Activated CD8-positive, alpha-beta T cell treated with anti-CD3 and anti-CD28 coated beads for 36 hours (primary cell): ENCODE measurements at regions of chr5 and their contacts with region 1.

Region 1: GRCh38 chr5:154520861-154521453 is 42.9 kb upstream of the HAND1 start:
- DNase-seq: peak; percentile 20
- ATAC-seq: no peak
- H3K4me3 Mint-ChIP-seq: no peak overlapping the region
- H3K27ac Mint-ChIP-seq: no peak overlapping the region
- H3K4me1 Mint-ChIP-seq: no peaks in the 10 kb centered on the region
- H3K27me3 Mint-ChIP-seq: peaks cover 48% of the 10 kb centered on the region
- CTCF ChIP-seq: peak; percentile 75

Region 2: DNA sequence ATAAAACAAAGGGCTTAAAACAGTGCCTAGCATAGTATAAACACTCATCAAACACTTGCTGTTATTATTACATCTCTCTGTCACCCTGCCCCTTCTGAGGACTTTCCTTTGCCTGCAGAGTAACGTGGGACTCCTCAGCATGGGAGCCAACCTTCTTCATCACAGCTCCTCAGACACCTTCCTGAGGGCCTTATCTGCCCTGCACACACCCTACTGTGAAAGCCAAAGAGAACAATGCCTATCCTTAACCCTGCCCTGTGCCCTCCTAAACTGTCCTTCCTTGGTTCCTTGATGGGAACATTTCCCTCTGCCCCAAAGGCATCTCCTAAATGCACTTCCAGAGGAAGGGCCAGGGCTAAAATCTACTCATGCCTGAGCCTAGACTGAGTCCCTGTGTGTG is 22.4 kb before region 1 on chr5:
- CTCF ChIA-PET with region 1: interaction called, 20 read pairs
- POLR2A ChIA-PET with region 1: no interaction called
- intact Hi-C with region 1: no loop called
- DNase-seq: no peak
- ATAC-seq: no peak
- H3K4me3 Mint-ChIP-seq: no peak overlapping the region
- H3K27ac Mint-ChIP-seq: no peak overlapping the region
- H3K4me1 Mint-ChIP-seq: peaks cover 2% of the 10 kb centered on the region
- H3K27me3 Mint-ChIP-seq: peaks cover 32% of the 10 kb centered on the region
- CTCF ChIP-seq: no peak

Region 3: DNA sequence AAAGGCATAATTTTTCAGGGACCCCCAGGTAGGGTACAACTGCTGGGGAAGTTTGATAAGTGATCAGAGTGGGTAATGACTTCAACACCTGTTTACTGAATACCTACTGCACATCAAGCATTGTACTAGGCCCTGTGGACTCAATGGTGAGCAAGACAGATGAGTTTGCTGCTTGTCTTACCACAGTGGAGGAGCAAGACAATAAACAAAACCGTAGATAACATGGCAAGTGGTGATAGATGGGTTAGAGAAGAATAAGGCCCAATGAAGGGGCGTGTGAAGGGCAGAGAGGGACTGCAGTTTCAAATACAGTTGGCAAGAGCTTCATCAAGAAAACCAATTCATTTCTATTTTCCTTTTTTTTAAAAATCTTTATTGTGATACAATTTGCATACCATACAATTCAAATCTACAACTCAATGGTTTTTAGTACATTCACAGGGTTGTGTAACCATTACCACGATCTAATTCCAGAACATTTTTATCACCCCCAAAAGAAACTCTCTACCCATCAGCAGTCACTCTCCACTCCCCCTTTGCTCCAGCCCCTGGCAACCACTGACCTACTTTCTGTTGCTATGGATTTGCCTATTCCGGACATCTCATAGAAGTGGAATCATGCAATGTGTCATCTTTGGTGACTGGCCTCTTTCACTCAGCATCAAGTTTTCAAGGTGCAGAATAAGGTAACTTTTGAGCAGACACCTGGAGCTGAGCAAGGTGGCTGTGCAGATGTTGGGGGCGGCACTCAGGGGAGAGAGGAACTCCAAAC is 11.0 kb before region 1 on chr5:
- CTCF ChIA-PET with region 1: interaction called, 25 read pairs
- POLR2A ChIA-PET with region 1: no interaction called
- intact Hi-C with region 1: no loop called
- DNase-seq: no peak
- ATAC-seq: no peak
- H3K4me3 Mint-ChIP-seq: no peak overlapping the region
- H3K27ac Mint-ChIP-seq: no peak overlapping the region
- H3K4me1 Mint-ChIP-seq: peaks cover 14% of the 10 kb centered on the region
- H3K27me3 Mint-ChIP-seq: peaks cover 31% of the 10 kb centered on the region
- CTCF ChIP-seq: no peak

Region 4: DNA sequence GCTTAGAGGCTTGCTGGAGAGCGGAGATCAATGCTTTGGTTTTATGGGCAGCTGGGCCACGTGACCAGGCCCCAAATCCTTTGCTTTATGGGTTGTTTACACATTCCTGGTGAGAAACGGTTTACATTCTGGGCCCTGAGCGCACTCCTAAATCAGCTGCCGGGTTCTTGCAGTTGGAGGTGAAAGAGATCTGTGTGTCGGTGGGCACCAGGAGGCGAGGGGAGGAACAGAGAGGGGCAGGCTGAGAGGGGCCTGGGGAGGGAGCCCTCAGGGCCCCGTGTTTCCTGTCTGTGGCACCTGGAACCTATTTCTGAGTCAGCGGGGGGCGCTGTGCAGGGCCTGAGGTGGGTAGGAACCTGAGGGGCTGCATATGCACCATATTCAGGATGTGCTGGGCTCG is 20.6 kb after region 1 on chr5:
- CTCF ChIA-PET with region 1: interaction called, 14 read pairs
- POLR2A ChIA-PET with region 1: no interaction called
- intact Hi-C with region 1: no loop called
- DNase-seq: no peak
- ATAC-seq: no peak
- H3K4me3 Mint-ChIP-seq: no peak overlapping the region
- H3K27ac Mint-ChIP-seq: no peak overlapping the region
- H3K4me1 Mint-ChIP-seq: no peaks in the 10 kb centered on the region
- H3K27me3 Mint-ChIP-seq: peaks cover 6% of the 10 kb centered on the region
- CTCF ChIP-seq: no peak

Region 5: GRCh38 chr5:154575546-154576428 is 54.8 kb after region 1 on chr5:
- CTCF ChIA-PET with region 1: interaction called, 10 read pairs
- POLR2A ChIA-PET with region 1: no interaction called
- intact Hi-C with region 1: no loop called
- DNase-seq: no peak
- ATAC-seq: no peak
- H3K4me3 Mint-ChIP-seq: no peak overlapping the region
- H3K27ac Mint-ChIP-seq: no peak overlapping the region
- H3K4me1 Mint-ChIP-seq: no peaks in the 10 kb centered on the region
- H3K27me3 Mint-ChIP-seq: peaks cover 19% of the 10 kb centered on the region
- CTCF ChIP-seq: no peak